GM12878 (cell line): ENCODE measurements at regions of chr17 and their contacts with region 1.

Region 1: DNA sequence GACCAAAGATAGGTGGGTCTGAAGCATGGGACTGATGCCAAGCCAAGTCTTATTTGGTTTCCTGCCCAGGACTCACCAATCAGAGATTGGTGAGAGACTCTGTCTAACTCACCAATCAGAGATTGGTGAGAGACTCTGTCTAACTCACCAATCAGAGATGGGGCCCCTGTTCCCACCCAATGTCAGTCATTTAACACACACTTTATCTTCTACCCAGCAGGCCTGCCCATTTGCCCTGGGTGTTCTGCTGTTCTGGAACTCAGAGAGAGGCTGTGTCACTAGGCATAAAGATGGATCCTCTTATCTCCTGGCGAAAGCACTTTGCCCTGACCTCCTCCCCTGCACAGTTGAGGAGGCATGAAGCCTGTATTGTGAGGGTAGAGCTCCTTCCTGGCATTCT is 5.4 kb upstream of the RHOT1 start:
- DNase-seq: no peak
- ATAC-seq: peak; percentile 61
- H3K4me3 ChIP-seq: no peak overlapping the region
- H3K27ac ChIP-seq: no peak overlapping the region
- H3K4me1 ChIP-seq: peaks cover 4% of the 10 kb centered on the region; the same call in 1 of the 2 replicates
- H3K27me3 ChIP-seq: no peaks in the 10 kb centered on the region
- CTCF ChIP-seq: no peak
- EP300 ChIP-seq: no peak
- POLR2A ChIP-seq: no peak
- RAD21 ChIP-seq: no peak

Region 2: GRCh38 chr17:31907342-31907962 is 229.4 kb before region 1 on chr17:
- CTCF ChIA-PET with region 1: interaction called, 3 read pairs
- POLR2A ChIA-PET with region 1: no interaction called
- RAD21 ChIA-PET with region 1: interaction called, 3 read pairs
- SMC1A ChIA-PET with region 1: interaction called, 4 read pairs
- in situ Hi-C with region 1: no loop called
- intact Hi-C with region 1: loop called (anchors 10 kb)
- DNase-seq: no peak
- ATAC-seq: no peak
- H3K4me3 ChIP-seq: no peak overlapping the region
- H3K27ac ChIP-seq: no peak overlapping the region
- H3K4me1 ChIP-seq: peaks cover 2% of the 10 kb centered on the region
- H3K27me3 ChIP-seq: peaks cover 0 to 3% of the 10 kb centered on the region in 2 experiments; a peak in 1 of 4 replicates
- CTCF ChIP-seq: no peak
- EP300 ChIP-seq: no peak
- POLR2A ChIP-seq: no peak
- RAD21 ChIP-seq: no peak

Region 3: DNA sequence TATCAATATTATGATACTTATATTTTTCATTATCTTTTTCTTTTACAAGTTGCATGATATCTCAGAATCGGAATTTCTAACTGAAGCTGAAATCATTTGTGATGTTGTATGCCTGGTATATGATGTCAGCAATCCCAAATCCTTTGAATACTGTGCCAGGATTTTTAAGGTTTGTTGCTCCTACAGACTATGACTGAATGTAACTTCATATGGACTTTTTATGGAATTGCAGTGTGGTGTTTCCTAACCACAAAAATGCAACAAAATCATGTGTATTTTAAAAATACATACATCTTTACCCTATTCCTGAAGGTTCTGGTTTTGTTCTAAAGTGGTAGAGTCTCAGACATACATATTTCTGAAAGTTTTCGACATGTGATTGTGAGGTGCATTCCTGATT is 70.0 kb after region 1 on chr17:
- CTCF ChIA-PET with region 1: no interaction called
- POLR2A ChIA-PET with region 1: no interaction called
- RAD21 ChIA-PET with region 1: no interaction called
- SMC1A ChIA-PET with region 1: no interaction called
- in situ Hi-C with region 1: no loop called
- intact Hi-C with region 1: no loop called
- DNase-seq: no peak
- ATAC-seq: no peak
- H3K4me3 ChIP-seq: no peak overlapping the region
- H3K27ac ChIP-seq: no peak overlapping the region
- H3K4me1 ChIP-seq: no peaks in the 10 kb centered on the region
- H3K27me3 ChIP-seq: no peaks in the 10 kb centered on the region
- CTCF ChIP-seq: no peak
- EP300 ChIP-seq: no peak
- POLR2A ChIP-seq: no peak
- RAD21 ChIP-seq: no peak